ENCODE measurements at regions of chr2 and their contacts with region 1.

Region 1: GRCh38 chr2:70523996-70524965 is 29.3 kb downstream of the TGFA start:
- DNase-seq: peak; percentile 99
- ATAC-seq: peak; percentile 76
- H3K4me3 ChIP-seq: peak overlapping the region; percentile 55
- H3K27ac ChIP-seq: peak overlapping the region; percentile 99
- H3K4me1 ChIP-seq: peaks cover 67% of the 10 kb centered on the region
- H3K27me3 ChIP-seq: no peaks in the 10 kb centered on the region
- CTCF ChIP-seq: no peak

Region 2: GRCh38 chr2:70509553-70509952 is 14.7 kb before region 1 on chr2:
- CTCF ChIA-PET with region 1: no interaction called
- POLR2A ChIA-PET with region 1: no interaction called
- intact Hi-C with region 1: loop called (anchors 2 kb)
- DNase-seq: peak; percentile 66
- ATAC-seq: peak; percentile 37
- H3K4me3 ChIP-seq: peak overlapping the region; percentile 27; the same call in 1 of the 2 replicates
- H3K27ac ChIP-seq: peak overlapping the region; percentile 91
- H3K4me1 ChIP-seq: peaks cover 40% of the 10 kb centered on the region
- H3K27me3 ChIP-seq: no peaks in the 10 kb centered on the region
- CTCF ChIP-seq: no peak

Region 3: DNA sequence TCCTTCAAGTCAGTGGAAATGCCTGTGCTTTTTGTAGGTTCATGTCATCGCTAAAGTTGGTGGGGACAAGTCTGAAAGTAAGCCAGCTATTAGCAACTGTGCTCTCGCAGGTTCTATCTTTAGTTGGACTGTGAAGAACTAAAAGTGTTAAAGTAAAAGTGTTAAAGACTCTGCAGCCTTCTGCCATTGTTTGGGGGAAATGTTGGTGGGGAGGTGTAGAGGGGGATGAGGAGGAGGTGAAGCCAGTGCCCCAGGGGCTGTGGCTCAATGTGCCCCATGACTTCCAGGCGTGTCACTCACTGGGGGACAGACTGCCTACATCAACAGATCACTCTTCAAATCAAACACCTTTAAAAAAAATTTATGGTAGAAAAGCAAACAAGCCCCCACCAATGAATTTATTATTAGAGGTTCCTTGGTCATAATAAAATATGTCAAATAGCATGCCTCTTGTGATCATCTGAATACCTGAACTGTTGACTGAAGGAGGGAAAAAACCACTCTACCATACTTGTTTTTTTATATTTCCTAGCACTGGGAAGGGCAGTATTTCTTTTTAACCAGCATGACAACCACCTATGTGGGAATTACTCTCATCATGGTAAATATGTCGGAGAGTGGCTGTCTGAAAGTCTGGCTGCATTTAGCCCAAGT is 10.0 kb after region 1 on chr2:
- CTCF ChIA-PET with region 1: no interaction called
- POLR2A ChIA-PET with region 1: no interaction called
- intact Hi-C with region 1: loop called (anchors 1 kb)
- DNase-seq: peak; percentile 68
- ATAC-seq: peak; percentile 80
- H3K4me3 ChIP-seq: 0 out of 2 replicates have a peak overlapping the region, but pooled peaks have one; percentile 2
- H3K27ac ChIP-seq: peak overlapping the region; percentile 71
- H3K4me1 ChIP-seq: peaks cover 61% of the 10 kb centered on the region
- H3K27me3 ChIP-seq: no peaks in the 10 kb centered on the region
- CTCF ChIP-seq: no peak

Region 4: DNA sequence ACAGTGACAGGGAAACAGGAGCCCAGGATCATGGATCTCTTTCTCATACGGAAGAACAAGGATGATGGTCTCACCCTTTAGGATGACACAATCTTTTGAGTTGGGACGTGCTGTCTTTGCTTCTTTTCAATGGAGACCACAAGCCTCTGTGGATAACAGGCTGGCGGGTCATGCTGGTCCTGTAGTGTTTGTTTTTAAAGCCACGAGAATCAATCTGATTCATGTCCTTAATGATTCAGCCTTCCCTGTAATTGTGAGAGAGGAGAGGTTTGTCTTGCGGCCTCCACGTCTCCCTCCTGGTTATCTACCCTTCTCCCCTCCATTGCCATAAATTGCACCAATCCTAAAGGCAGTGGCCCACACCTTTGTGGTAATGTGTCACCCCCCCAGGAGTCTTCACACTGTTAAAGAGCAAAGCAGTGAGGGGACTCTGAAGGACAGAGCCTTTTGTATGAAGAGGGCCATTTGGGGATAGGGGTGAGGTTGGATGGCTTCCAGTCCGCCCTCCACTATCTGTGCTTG is 117.0 kb after region 1 on chr2:
- CTCF ChIA-PET with region 1: no interaction called
- POLR2A ChIA-PET with region 1: no interaction called
- intact Hi-C with region 1: no loop called
- DNase-seq: peak; percentile 56
- ATAC-seq: peak; percentile 76
- H3K4me3 ChIP-seq: no peak overlapping the region
- H3K27ac ChIP-seq: no peak overlapping the region
- H3K4me1 ChIP-seq: peaks cover 16% of the 10 kb centered on the region
- H3K27me3 ChIP-seq: no peaks in the 10 kb centered on the region
- CTCF ChIP-seq: no peak